Mammary epithelial cell (primary cell): ENCODE measurements at regions of chr10 and their contacts with region 1.

Region 1: GRCh38 chr10:5502903-5503835 is 3.8 kb upstream of the CALML5 start:
- DNase-seq: peak; percentile 76
- H3K4me3 ChIP-seq: no peak overlapping the region
- H3K27ac ChIP-seq: no peak overlapping the region
- H3K4me1 ChIP-seq: peaks cover 38% of the 10 kb centered on the region
- H3K27me3 ChIP-seq: no peaks in the 10 kb centered on the region
- CTCF ChIP-seq: no peak

Region 2: DNA sequence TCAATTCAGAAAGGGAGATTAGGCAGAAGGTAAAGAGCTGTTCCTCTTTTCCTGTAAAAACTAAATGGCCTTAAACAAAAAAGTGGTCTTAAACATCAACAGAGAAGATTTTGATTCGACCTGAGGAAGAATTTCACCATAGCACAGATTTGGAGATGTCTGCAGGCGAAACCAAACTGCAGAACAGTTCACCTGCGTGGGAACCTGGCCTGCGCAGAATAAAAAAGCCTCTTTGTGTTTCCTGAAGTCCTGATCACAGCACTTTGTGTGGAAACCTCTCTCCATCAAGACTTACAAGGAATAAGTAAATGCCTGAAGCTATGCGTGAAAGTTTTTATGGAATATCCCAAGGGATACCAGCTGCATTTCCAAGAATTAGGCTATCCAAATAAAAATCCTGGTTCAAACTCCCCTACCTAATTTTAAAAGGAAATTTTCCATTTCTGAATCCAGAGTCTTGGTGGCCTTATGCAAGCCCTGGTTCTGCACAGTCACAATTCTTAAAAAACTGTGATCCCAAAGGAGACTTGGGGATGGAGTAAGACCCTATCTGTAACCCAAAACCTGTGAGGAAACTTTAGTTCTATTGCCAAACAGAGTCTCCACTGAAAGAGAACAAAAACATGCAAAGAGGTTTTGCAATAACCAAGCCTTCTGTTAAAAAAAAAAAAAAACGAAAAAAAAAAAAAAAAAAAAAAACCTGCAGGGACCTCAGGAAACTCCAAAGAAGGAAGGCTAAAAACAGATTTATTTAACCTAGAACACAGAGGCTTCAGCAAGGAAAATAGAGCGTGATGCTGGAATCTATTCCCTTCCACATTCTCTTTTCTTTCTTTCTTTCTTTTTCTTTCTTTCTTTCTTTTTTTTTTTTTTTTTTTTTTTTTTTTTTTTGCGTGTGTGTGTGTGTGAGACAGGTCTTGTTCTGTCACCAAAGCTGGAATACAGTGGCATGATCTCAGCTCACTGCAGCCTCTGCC is 32.0 kb after region 1 on chr10:
- CTCF ChIA-PET with region 1: no interaction called
- dilution Hi-C with region 1: loop called (anchors 5 kb)
- in situ Hi-C with region 1: no loop called
- intact Hi-C with region 1: no loop called
- DNase-seq: peak; percentile 63
- H3K4me3 ChIP-seq: no peak overlapping the region
- H3K27ac ChIP-seq: peak overlapping the region; percentile 93
- H3K4me1 ChIP-seq: peaks cover 44% of the 10 kb centered on the region
- H3K27me3 ChIP-seq: no peaks in the 10 kb centered on the region
- CTCF ChIP-seq: no peak